Gastrocnemius medialis (tissue), 4 donors: ENCODE measurements at regions of chr3 and their contacts with region 1.

Region 1: DNA sequence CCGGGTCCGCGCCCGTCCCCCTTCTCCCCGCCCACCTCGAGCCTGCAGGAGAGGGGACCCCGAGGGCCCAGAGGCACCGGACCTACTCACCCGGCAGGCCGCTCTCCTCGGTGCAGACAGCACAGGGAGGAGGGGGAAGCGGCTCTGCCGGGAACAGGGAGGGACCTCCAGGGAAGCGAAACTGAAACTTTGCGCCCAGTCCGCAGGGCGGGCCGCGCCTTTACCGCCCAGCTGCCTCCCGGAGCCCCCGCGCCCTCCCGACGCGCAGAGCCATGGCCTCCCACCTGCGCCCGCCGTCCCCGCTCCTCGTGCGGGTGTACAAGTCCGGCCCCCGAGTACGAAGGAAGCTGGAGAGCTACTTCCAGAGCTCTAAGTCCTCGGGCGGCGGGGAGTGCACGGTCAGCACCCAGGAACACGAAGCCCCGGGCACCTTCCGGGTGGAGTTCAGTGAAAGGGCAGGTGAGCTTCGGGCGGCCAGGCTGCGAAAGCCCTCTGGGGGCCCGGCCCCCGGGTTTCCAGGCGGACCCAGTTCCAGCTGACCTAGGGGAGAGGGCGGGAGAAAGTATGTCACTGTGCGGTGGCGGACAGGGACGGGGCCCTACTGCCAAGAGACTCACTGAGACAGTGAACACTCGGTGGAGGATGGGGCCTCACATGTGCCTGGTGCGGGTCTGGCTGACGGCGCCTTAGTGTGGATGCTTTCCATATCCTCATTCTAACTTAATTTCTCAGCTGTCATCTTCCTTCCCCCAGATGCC is at the starts of genes DTX3L and PARP9:
- DNase-seq: peak; percentile 66 to 74
- ATAC-seq: peak; percentile 91 to 94
- H3K4me3 ChIP-seq: peak within 1 kb of the TSS; percentile 63 to 99 (median 94)
- H3K27ac ChIP-seq: peak within 1 kb of the TSS; percentile 84 to 98 (median 90)
- H3K4me1 ChIP-seq: peaks cover 19 to 30% of the 10 kb centered on the region in 2 donors
- H3K27me3 ChIP-seq: no peaks in the 10 kb centered on the region
- CTCF ChIP-seq: no peak
- POLR2A ChIP-seq: peak; percentile 45 to 46
- total RNA-seq, gene DTX3L: 6.6 to 15.6 (median 9.4) TPM
- total RNA-seq, gene PARP9: 5.9 to 9.6 (median 8.2) TPM

Region 2: GRCh38 chr3:122392868-122393844 is 171.2 kb before region 1 on chr3:
- in situ Hi-C with region 1: no loop called
- intact Hi-C with region 1: loop called (anchors 5 kb)
- DNase-seq: no peak
- ATAC-seq: peak in 1 of 2 donors; percentile 37
- H3K4me3 ChIP-seq: no peak overlapping the region
- H3K27ac ChIP-seq: peak overlapping the region in 3 of 4 donors; percentile 6 to 29 (median 9)
- H3K4me1 ChIP-seq: peaks cover 0 to 23% of the 10 kb centered on the region in 2 donors
- H3K27me3 ChIP-seq: no peaks in the 10 kb centered on the region
- CTCF ChIP-seq: peak; percentile 54 to 83 (median 70)
- POLR2A ChIP-seq: no peak

Region 3: DNA sequence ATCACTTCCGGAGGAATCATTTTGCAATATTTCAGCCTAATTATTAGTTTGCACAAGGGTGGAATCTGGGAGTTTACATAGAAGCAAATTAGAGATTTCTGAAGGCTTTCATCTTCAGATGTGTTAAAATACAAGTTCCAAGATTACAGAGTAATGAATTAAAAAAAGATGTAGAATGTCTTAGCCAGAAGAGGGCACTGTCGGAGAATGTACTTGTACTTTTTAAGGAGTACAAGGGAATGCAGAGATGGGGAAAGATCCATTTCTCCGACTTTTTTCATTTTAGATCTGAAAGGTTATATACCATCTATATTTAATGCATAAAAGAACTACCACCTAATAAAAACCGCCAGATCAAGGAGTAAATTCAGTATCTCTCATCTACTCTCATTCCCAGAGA is 105.3 kb before region 1 on chr3:
- in situ Hi-C with region 1: no loop called
- intact Hi-C with region 1: loop called (anchors 10 kb)
- DNase-seq: no peak
- ATAC-seq: peak; percentile 33 to 42
- H3K4me3 ChIP-seq: no peak overlapping the region
- H3K27ac ChIP-seq: no peak overlapping the region
- H3K4me1 ChIP-seq: no peaks in the 10 kb centered on the region
- H3K27me3 ChIP-seq: no peaks in the 10 kb centered on the region
- CTCF ChIP-seq: peak in 4 of 5 experiments; percentile 14 to 36 (median 28)
- POLR2A ChIP-seq: no peak

Region 4: GRCh38 chr3:122502139-122502538 is 62.2 kb before region 1 on chr3:
- in situ Hi-C with region 1: no loop called
- intact Hi-C with region 1: no loop called
- DNase-seq: no peak
- ATAC-seq: no peak
- H3K4me3 ChIP-seq: no peak overlapping the region
- H3K27ac ChIP-seq: peak overlapping the region; percentile 67 to 83 (median 75)
- H3K4me1 ChIP-seq: peaks cover 51 to 87% of the 10 kb centered on the region in 2 donors
- H3K27me3 ChIP-seq: no peaks in the 10 kb centered on the region
- CTCF ChIP-seq: no peak
- POLR2A ChIP-seq: no peak

Region 5: DNA sequence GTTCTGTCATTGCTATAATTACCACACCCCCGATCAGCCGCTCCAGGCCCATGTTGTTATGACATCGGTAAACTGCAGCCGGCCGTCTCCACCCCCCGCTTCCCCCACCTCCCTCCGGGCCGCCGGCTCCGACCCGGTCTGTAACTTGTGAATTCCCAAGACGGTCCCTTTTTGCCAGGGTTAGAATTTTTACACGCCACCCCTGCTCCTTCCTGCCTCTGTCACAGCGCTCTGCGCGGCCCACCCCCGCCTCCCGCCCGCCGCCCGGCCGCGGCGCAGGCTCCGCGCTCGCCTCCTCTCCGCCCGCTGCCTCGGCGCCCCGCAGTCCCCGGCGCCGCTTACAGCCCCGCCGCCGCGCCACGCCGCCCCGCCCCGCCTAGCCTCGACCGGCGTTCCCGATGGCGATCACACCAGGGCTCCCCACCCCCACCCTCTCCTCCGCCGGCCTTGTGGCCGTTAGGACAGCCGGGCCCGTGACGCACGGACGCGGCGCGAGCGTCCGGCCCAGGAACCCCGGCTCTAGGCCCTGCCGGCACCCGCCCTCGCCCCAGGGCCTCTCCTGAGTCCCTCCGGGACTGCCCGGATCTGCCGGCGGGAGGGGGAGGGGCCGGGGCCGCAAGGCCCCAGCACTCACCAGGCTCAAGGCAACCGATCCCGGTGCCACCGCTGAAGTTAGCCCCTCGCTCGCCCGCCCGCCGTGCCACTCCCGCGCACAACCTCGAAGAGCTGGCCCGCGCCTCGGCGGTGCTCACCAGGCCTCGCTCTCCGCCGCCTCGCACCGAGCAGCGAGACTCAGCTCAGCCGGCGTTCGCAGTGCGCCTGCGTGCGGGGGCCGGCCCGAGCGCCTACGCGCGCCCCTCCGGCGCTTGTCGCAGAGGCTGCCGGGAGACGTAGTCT is 50.0 kb before region 1 on chr3 and contains the start of gene KPNA1:
- in situ Hi-C with region 1: no loop called
- intact Hi-C with region 1: loop called (anchors 2 kb)
- DNase-seq: peak; percentile 90 to 93
- ATAC-seq: peak; percentile 76 to 84
- H3K4me3 ChIP-seq: peak within 1 kb of the TSS; percentile 65 to 94 (median 84)
- H3K27ac ChIP-seq: peak within 1 kb of the TSS; percentile 94 to 99 (median 97)
- H3K4me1 ChIP-seq: peaks cover 39 to 44% of the 10 kb centered on the region in 2 donors
- H3K27me3 ChIP-seq: no peaks in the 10 kb centered on the region
- CTCF ChIP-seq: no peak
- POLR2A ChIP-seq: peak; percentile 99 to 100
- total RNA-seq, gene KPNA1: 108 to 119 (median 112) TPM